ENCODE measurements at regions of chr20 and their contacts with region 1.

Region 1: GRCh38 chr20:54199721-54200176 is 8.1 kb upstream of the PFDN4 start:
- DNase-seq: peak; percentile 77
- H3K4me3 Mint-ChIP-seq: no peak overlapping the region
- H3K27ac Mint-ChIP-seq: no peak overlapping the region
- H3K4me1 Mint-ChIP-seq: peaks cover 19% of the 10 kb centered on the region
- H3K27me3 Mint-ChIP-seq: no peaks in the 10 kb centered on the region
- CTCF ChIP-seq: peak; percentile 91

Region 2: GRCh38 chr20:54062812-54063280 is 136.9 kb before region 1 on chr20:
- CTCF ChIA-PET with region 1: interaction called, 31 read pairs
- POLR2A ChIA-PET with region 1: no interaction called
- intact Hi-C with region 1: no loop called
- DNase-seq: peak; percentile 64
- H3K4me3 Mint-ChIP-seq: no peak overlapping the region
- H3K27ac Mint-ChIP-seq: no peak overlapping the region
- H3K4me1 Mint-ChIP-seq: peaks cover 21% of the 10 kb centered on the region
- H3K27me3 Mint-ChIP-seq: no peaks in the 10 kb centered on the region
- CTCF ChIP-seq: peak; percentile 59

Region 3: GRCh38 chr20:54093423-54094267 is 106.1 kb before region 1 on chr20:
- CTCF ChIA-PET with region 1: interaction called, 1,436 read pairs
- POLR2A ChIA-PET with region 1: interaction called, 76 read pairs
- intact Hi-C with region 1: loop called (anchors 1 kb)
- DNase-seq: no peak
- H3K4me3 Mint-ChIP-seq: no peak overlapping the region
- H3K27ac Mint-ChIP-seq: no peak overlapping the region
- H3K4me1 Mint-ChIP-seq: no peaks in the 10 kb centered on the region
- H3K27me3 Mint-ChIP-seq: no peaks in the 10 kb centered on the region
- CTCF ChIP-seq: no peak

Region 4: GRCh38 chr20:54132612-54133433 is 66.9 kb before region 1 on chr20:
- CTCF ChIA-PET with region 1: interaction called, 30 read pairs
- POLR2A ChIA-PET with region 1: interaction called, 13 read pairs
- intact Hi-C with region 1: no loop called
- DNase-seq: peak; percentile 99
- H3K4me3 Mint-ChIP-seq: no peak overlapping the region
- H3K27ac Mint-ChIP-seq: no peak overlapping the region
- H3K4me1 Mint-ChIP-seq: peaks cover 8% of the 10 kb centered on the region
- H3K27me3 Mint-ChIP-seq: no peaks in the 10 kb centered on the region
- CTCF ChIP-seq: no peak

Region 5: GRCh38 chr20:54179946-54180345 is 19.8 kb before region 1 on chr20:
- CTCF ChIA-PET with region 1: interaction called, 16 read pairs
- POLR2A ChIA-PET with region 1: interaction called, 7 read pairs
- intact Hi-C with region 1: no loop called
- DNase-seq: peak; percentile 72
- H3K4me3 Mint-ChIP-seq: no peak overlapping the region
- H3K27ac Mint-ChIP-seq: peak overlapping the region; percentile 13
- H3K4me1 Mint-ChIP-seq: peaks cover 30% of the 10 kb centered on the region
- H3K27me3 Mint-ChIP-seq: no peaks in the 10 kb centered on the region
- CTCF ChIP-seq: no peak

Region 6: GRCh38 chr20:54295686-54296085 is 95.9 kb after region 1 on chr20:
- CTCF ChIA-PET with region 1: no interaction called
- POLR2A ChIA-PET with region 1: no interaction called
- intact Hi-C with region 1: no loop called
- DNase-seq: no peak
- H3K4me3 Mint-ChIP-seq: no peak overlapping the region
- H3K27ac Mint-ChIP-seq: no peak overlapping the region
- H3K4me1 Mint-ChIP-seq: peaks cover 7% of the 10 kb centered on the region
- H3K27me3 Mint-ChIP-seq: peaks cover 10% of the 10 kb centered on the region
- CTCF ChIP-seq: no peak

Measured in MCF 10A (cell line).